IMR-90 (cell line): ENCODE measurements at regions of chr6 and their contacts with region 1.

Region 1: DNA sequence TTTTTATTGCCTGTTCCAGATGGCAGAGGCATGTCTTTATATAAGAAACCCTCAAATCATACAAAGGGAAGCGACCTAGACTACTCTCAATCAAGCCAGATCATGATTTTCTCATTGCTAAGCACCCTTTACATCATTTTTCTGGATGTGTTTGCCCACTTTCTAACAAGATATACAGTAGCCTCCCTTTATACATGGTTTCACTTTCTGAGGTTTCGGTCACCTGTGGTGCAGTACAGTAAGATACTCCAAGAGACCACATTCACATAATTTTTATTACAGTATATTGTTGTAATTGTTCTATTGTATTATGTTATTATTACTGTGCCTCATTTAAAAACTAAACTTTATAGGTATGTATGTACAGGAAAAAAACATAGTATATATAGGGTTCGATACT is 23.6 kb downstream of the TOMM6 start:
- DNase-seq: no peak
- ATAC-seq: no peak
- H3K4me3 ChIP-seq: no peak overlapping the region
- H3K27ac ChIP-seq: no peak overlapping the region
- H3K4me1 ChIP-seq: no peaks in the 10 kb centered on the region
- H3K27me3 ChIP-seq: no peaks in the 10 kb centered on the region
- CTCF ChIP-seq: no peak
- POLR2A ChIP-seq: no peak
- RAD21 ChIP-seq: no peak

Region 2: GRCh38 chr6:41878246-41878645 is 67.2 kb after region 1 on chr6:
- CTCF ChIA-PET with region 1: no interaction called
- POLR2A ChIA-PET with region 1: no interaction called
- dilution Hi-C with region 1: no loop called
- in situ Hi-C with region 1: no loop called
- intact Hi-C with region 1: loop called (anchors 2 kb)
- DNase-seq: peak; percentile 68
- ATAC-seq: peak; percentile 77
- H3K4me3 ChIP-seq: no peak overlapping the region
- H3K27ac ChIP-seq: no peak overlapping the region
- H3K4me1 ChIP-seq: peaks cover 5% of the 10 kb centered on the region; the same call in 1 of the 2 replicates
- H3K27me3 ChIP-seq: no peaks in the 10 kb centered on the region
- CTCF ChIP-seq: no peak
- POLR2A ChIP-seq: no peak
- RAD21 ChIP-seq: no peak

Region 3: DNA sequence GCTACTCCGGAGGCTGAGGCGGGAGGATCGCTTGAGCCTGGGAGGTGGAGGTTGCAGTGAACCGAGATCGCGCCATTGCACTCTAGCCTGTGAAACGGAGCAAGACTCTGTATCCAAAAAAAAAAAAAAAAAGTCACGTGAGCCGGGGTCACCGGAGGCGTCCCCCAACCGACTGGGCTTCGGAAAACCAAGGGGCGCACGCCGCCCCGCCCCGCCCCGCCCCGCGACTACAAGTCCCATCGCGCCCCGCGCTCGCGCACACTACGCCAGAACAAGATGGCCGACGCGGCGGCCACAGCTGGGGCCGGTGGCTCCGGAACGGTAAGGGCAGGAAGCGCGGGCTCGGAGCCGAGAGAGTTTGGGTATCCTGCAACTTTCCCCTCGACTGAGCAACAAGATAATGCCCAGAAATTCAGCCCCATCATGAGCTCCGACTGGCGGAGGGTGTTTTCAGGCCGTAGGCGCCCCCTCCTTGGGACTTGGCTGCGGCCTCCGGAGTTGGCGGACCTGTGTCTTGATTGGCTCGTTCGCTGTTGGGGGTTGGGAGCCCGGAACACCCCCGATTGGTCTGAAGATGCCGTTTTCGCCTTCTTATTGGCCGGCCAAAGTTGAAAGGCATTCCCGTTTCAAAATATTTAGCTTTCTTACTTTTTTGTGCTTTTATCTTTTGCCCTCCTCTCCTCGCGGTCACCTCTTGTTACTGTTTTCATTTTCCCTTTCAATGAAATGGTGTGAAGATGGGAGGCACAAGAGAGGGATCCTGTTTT is 239.4 kb after region 1 on chr6 and contains the start of gene TAF8:
- CTCF ChIA-PET with region 1: no interaction called
- POLR2A ChIA-PET with region 1: no interaction called
- dilution Hi-C with region 1: no loop called
- in situ Hi-C with region 1: no loop called
- intact Hi-C with region 1: no loop called
- DNase-seq: peak; percentile 92
- ATAC-seq: peak; percentile 92
- H3K4me3 ChIP-seq: peak within 1 kb of the TSS; percentile 97
- H3K27ac ChIP-seq: peak within 1 kb of the TSS; percentile 99
- H3K4me1 ChIP-seq: peaks cover 15% of the 10 kb centered on the region
- H3K27me3 ChIP-seq: no peaks in the 10 kb centered on the region; the same call in 1 of the 2 replicates
- CTCF ChIP-seq: no peak
- POLR2A ChIP-seq: peak; percentile 98
- RAD21 ChIP-seq: no peak
- total RNA-seq, gene TAF8: 19.7 and 22.8 TPM in 2 replicates

Region 4: DNA sequence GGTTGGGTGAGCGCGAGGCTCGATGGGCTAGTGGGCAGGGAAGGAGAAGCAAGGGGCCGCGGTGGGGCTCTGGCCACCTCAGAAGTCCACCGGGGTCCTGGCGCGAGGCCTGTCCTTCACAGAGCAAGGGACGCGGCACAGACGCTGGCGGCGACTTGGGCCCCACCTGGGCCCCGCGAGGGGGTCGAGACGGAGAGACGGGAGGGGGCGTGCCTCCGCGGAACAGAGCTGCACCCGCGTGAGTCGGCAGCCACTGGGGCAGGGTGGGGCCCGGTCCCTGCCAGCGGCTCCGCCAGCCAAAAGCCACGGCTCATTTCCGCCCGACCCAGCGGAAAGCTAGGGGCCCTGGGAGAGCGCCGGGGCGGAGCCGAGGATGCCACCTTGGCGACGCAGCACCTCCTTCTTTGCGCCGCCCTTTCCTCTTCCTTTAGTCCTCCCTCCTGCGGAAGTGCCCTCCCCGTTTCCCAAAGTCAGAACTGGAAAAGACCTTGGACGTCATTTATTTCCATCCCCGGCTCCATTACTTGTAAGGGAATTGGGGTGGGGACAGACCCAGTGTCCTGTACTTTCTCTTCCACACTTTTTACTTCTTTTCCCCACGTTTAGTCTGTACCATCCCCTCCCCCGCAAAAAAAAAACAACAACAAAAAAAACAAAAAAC is 1242.6 kb after region 1 on chr6 and contains the start of gene CUL7:
- CTCF ChIA-PET with region 1: no interaction called
- POLR2A ChIA-PET with region 1: no interaction called
- dilution Hi-C with region 1: no loop called
- in situ Hi-C with region 1: no loop called
- intact Hi-C with region 1: no loop called
- DNase-seq: peak; percentile 93
- ATAC-seq: peak; percentile 95
- H3K4me3 ChIP-seq: peak within 1 kb of the TSS; percentile 68
- H3K27ac ChIP-seq: peak within 1 kb of the TSS; percentile 87
- H3K4me1 ChIP-seq: peaks cover 20% of the 10 kb centered on the region
- H3K27me3 ChIP-seq: no peaks in the 10 kb centered on the region
- CTCF ChIP-seq: 0 out of 2 replicates have a peak, but pooled peaks have one; percentile 5
- POLR2A ChIP-seq: peak; percentile 90
- RAD21 ChIP-seq: peak; percentile 4; the same call in 1 of the 2 replicates
- total RNA-seq, gene CUL7: 33.3 and 39.3 TPM in 2 replicates